Activated CD4-positive, alpha-beta T cell treated with anti-CD3 and anti-CD28 coated beads, Interleukin-2, amount 10 ng/mL, durations not matched to agents 24 days and 14 days (primary cell): ENCODE measurements at regions of chr15 and their contacts with region 1.

Region 1: DNA sequence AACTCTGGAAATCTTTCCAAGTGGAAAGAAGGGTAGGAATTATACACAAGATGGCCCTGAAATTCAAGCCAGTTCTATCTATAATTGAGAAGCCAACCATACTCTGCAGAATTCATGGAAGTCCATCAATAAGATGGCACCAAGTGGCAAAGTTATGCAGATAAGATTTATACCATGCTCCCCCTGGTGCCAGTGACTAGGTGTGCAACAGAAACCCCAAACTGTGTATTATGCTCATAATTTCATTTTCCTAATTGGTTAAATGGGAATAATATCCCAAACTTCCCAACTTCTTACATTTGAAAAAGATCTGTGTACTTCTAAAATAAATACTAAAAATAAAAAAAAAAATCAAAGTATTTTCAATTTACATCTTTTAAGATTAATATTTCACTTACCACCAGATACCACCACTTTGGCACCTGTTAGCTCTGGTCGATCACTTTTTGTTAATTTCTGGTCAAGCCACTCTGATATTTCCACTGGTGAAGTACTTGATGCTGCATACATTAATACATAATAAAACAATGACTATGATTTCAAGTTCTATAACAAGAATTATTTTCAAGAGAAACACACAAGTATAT is 25.9 kb downstream of the ETFA start:
- DNase-seq: no peak
- H3K4me3 Mint-ChIP-seq: no peak overlapping the region
- H3K27ac Mint-ChIP-seq: no peak overlapping the region
- H3K4me1 Mint-ChIP-seq: peaks cover 17% of the 10 kb centered on the region
- H3K27me3 Mint-ChIP-seq: no peaks in the 10 kb centered on the region

Region 2: GRCh38 chr15:75831571-75831979 is 453.8 kb before region 1 on chr15:
- intact Hi-C with region 1: no loop called
- DNase-seq: no peak
- H3K4me3 Mint-ChIP-seq: no peak overlapping the region
- H3K27ac Mint-ChIP-seq: no peak overlapping the region
- H3K4me1 Mint-ChIP-seq: peaks cover 17% of the 10 kb centered on the region
- H3K27me3 Mint-ChIP-seq: peaks cover 5% of the 10 kb centered on the region

Region 3: DNA sequence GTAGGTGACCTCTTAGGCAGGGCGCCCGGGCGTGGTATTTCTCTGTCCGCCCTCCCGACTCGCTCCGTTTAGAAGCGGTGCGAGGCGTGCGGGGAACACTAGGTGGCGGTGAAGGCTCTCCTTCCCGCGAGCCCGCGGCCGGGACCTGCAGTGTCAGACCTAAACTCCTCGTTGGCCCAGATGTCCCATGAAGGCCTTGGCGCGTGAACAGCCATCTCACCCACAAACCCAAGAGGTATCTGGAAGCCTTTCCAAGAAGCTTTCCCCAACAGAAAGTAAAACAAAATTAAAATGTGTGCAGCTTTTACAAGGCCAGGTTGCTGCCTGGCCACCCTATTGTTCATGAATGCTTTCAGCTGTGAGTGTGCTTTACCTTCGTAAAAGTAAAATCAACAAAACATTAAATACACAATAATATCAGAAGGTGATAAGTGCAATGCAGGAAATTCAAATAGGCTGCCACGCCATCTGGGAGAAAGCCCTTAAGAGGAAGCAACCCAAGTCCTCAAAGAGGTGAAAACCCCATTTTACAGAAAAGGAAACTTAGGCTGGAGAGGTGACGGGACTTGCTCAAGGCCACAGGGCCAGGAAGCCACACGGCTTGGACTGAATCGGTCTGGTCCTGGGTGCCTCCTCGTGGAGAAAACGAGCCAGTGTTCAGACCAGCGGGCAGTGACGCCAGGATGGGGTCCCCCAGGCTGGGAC is 94.3 kb before region 1 on chr15:
- intact Hi-C with region 1: loop called (anchors 10 kb)
- DNase-seq: peak; percentile 92
- H3K4me3 Mint-ChIP-seq: peak overlapping the region; percentile 20
- H3K27ac Mint-ChIP-seq: no peak overlapping the region
- H3K4me1 Mint-ChIP-seq: peaks cover 8% of the 10 kb centered on the region
- H3K27me3 Mint-ChIP-seq: peaks cover 36% of the 10 kb centered on the region

Region 4: GRCh38 chr15:76311100-76311953 is 26.0 kb after region 1 on chr15 and contains the start of gene ETFA:
- intact Hi-C with region 1: loop called (anchors 2 kb)
- DNase-seq: peak; percentile 97
- H3K4me3 Mint-ChIP-seq: peak within 1 kb of the TSS; percentile 90
- H3K27ac Mint-ChIP-seq: peak within 1 kb of the TSS; percentile 86
- H3K4me1 Mint-ChIP-seq: peaks cover 22% of the 10 kb centered on the region
- H3K27me3 Mint-ChIP-seq: peaks cover 2% of the 10 kb centered on the region
- total RNA-seq, gene ETFA: 144 and 146 TPM in 2 replicates

Region 5: DNA sequence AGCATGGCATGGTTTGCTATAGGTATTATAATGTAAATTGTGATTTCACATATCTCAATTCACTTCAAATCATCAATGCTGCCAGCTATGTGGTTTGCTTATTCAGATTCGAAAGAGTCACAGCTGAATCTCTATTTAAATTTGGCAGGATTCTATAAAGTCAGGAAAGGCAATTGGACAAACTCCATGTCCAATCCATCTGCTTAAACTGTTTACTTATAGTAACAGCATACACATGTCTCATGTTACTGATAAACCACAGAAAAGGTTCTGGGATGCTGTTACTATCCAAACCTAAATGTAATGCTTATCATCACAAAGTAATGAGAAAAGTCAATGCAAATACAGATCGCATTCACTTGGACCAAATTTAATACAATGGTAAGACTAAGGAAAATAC is 280.9 kb after region 1 on chr15:
- intact Hi-C with region 1: no loop called
- DNase-seq: no peak
- H3K4me3 Mint-ChIP-seq: no peak overlapping the region
- H3K27ac Mint-ChIP-seq: no peak overlapping the region
- H3K4me1 Mint-ChIP-seq: no peaks in the 10 kb centered on the region
- H3K27me3 Mint-ChIP-seq: no peaks in the 10 kb centered on the region